MCF 10A (cell line): ENCODE measurements at regions of chr18 and their contacts with region 1.

Region 1: DNA sequence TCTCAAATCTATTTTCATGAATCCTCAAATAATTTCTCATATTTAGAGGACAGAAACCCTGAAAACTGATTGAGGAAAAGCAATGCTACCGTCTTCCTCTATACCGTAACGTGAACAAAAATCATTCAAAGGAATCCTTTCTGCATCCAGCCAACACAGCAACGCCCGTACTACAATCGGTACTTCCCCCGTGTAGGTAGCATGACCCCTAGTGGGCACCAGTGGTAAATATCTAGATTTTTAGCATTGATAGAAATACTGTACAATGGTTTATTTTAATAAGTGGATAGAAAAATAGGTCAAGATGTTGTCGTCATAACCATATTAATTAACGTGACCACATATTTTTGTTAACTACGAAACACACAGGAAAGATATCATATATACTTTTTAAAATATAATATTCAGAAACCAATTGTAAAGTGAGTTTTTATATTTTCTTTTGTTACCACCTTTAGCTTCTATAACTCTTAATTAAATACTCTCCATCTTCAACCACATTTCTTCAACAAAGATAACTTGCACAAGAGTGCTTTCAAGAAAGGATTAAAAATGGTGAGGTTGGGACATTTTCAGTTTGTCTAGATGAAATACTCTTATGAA is 194.1 kb downstream of the SS18 start:
- DNase-seq: peak; percentile 42
- H3K4me3 Mint-ChIP-seq: no peak overlapping the region
- H3K27ac Mint-ChIP-seq: no peak overlapping the region
- H3K4me1 Mint-ChIP-seq: no peaks in the 10 kb centered on the region
- H3K27me3 Mint-ChIP-seq: peaks cover 45% of the 10 kb centered on the region
- CTCF ChIP-seq: peak; percentile 66

Region 2: GRCh38 chr18:24600076-24600654 is 1296.1 kb before region 1 on chr18:
- CTCF ChIA-PET with region 1: no interaction called
- POLR2A ChIA-PET with region 1: no interaction called
- intact Hi-C with region 1: loop called (anchors 1 kb)
- DNase-seq: peak; percentile 65
- H3K4me3 Mint-ChIP-seq: no peak overlapping the region
- H3K27ac Mint-ChIP-seq: no peak overlapping the region
- H3K4me1 Mint-ChIP-seq: no peaks in the 10 kb centered on the region
- H3K27me3 Mint-ChIP-seq: peaks cover 37% of the 10 kb centered on the region
- CTCF ChIP-seq: peak; percentile 58

Region 3: GRCh38 chr18:24878289-24878688 is 1018.0 kb before region 1 on chr18:
- CTCF ChIA-PET with region 1: interaction called, 7 read pairs
- POLR2A ChIA-PET with region 1: no interaction called
- intact Hi-C with region 1: loop called (anchors 2 kb)
- DNase-seq: peak; percentile 22
- H3K4me3 Mint-ChIP-seq: no peak overlapping the region
- H3K27ac Mint-ChIP-seq: no peak overlapping the region
- H3K4me1 Mint-ChIP-seq: no peaks in the 10 kb centered on the region
- H3K27me3 Mint-ChIP-seq: no peaks in the 10 kb centered on the region
- CTCF ChIP-seq: no peak

Region 4: DNA sequence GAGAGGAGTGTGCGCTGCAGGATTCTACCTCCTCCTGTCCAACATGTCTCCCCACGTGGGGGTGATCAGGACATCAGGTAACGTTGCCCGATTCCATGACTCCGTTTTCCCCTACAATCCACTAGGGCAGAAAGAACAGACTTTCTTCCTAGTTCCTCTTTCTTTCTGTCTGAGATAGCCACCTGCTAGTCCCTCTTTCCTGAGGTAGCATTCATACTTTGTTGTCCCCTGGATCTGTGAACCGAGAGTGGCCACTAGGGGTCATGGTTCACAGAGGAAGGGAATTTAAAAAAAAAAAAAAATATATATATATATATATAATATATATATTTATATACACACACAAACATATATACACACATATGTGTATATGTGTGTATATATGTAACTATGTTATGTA is 334.4 kb before region 1 on chr18:
- CTCF ChIA-PET with region 1: interaction called, 4 read pairs
- POLR2A ChIA-PET with region 1: no interaction called
- intact Hi-C with region 1: loop called (anchors 5 kb)
- DNase-seq: peak; percentile 37
- H3K4me3 Mint-ChIP-seq: no peak overlapping the region
- H3K27ac Mint-ChIP-seq: no peak overlapping the region
- H3K4me1 Mint-ChIP-seq: no peaks in the 10 kb centered on the region
- H3K27me3 Mint-ChIP-seq: no peaks in the 10 kb centered on the region
- CTCF ChIP-seq: peak; percentile 14

Region 5: DNA sequence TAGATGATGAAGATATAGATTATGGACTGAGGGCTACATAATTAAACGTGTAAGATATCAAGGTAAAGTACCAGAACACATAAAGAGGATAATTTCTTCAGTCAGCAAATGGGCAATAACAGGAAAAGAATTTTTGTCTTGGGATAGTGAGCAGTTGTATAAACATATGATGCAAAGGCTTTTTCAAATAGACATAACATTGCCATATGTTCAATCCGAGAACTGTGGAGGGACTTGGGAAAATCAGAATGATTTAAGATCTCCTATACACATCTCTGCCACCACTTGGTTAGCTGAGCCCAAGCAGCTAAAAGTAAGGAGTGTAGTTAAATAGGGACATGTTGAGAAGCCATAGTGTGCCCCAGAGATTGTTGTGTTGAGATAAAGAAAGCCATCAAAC is 256.7 kb before region 1 on chr18:
- CTCF ChIA-PET with region 1: no interaction called
- POLR2A ChIA-PET with region 1: no interaction called
- intact Hi-C with region 1: no loop called
- DNase-seq: no peak
- H3K4me3 Mint-ChIP-seq: no peak overlapping the region
- H3K27ac Mint-ChIP-seq: no peak overlapping the region
- H3K4me1 Mint-ChIP-seq: no peaks in the 10 kb centered on the region
- H3K27me3 Mint-ChIP-seq: no peaks in the 10 kb centered on the region
- CTCF ChIP-seq: no peak

Region 6: GRCh38 chr18:25962176-25962575 is 65.9 kb after region 1 on chr18:
- CTCF ChIA-PET with region 1: no interaction called
- POLR2A ChIA-PET with region 1: no interaction called
- intact Hi-C with region 1: no loop called
- DNase-seq: no peak
- H3K4me3 Mint-ChIP-seq: no peak overlapping the region
- H3K27ac Mint-ChIP-seq: no peak overlapping the region
- H3K4me1 Mint-ChIP-seq: peaks cover 3% of the 10 kb centered on the region
- H3K27me3 Mint-ChIP-seq: peaks cover 32% of the 10 kb centered on the region
- CTCF ChIP-seq: no peak

Region 7: DNA sequence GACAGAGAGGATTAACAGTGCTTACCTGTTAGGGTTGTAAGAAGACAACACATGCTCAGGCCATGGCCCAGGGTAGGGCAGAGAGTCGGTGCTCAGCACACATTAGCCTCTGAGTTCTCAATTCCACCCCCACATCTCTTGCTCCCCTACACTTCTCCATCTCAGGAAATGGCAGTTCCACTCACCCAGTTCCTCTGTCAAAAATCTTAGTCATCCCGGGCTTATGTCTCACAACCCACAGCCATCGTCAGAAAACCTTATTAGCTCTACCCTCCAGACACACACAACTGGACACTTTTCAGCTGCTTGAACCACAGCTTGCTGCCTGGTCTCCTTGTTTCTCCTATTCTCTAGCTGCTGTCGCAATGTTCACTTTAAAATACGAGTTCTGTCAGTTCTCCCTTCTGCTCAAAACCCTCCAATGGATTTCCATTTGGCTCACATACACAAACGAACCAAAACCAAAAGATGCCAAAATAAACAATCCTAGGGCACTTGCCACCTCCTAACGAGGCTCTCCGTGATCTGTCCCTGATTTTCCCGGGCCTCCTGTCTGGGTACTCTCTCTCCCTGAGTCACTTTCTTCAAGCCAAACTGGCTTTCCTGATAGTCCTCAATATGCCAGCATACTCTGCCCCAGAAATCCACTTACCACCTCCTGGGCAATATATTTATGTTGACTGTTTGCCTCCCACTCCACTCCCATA is 562.4 kb after region 1 on chr18:
- CTCF ChIA-PET with region 1: no interaction called
- POLR2A ChIA-PET with region 1: no interaction called
- intact Hi-C with region 1: no loop called
- DNase-seq: peak; percentile 80
- H3K4me3 Mint-ChIP-seq: peak overlapping the region; percentile 55
- H3K27ac Mint-ChIP-seq: peak overlapping the region; percentile 89
- H3K4me1 Mint-ChIP-seq: peaks cover 41% of the 10 kb centered on the region
- H3K27me3 Mint-ChIP-seq: no peaks in the 10 kb centered on the region
- CTCF ChIP-seq: no peak